ENCODE measurements at regions of chr17 and their contacts with region 1.

Region 1: GRCh38 chr17:8209909-8210760 is at the start of gene AURKB:
- DNase-seq: peak; percentile 96
- ATAC-seq: peak; percentile 98
- H3K4me3 Mint-ChIP-seq: peak within 1 kb of the TSS; percentile 99
- H3K27ac Mint-ChIP-seq: peak within 1 kb of the TSS; percentile 97
- H3K4me1 Mint-ChIP-seq: peaks cover 20% of the 10 kb centered on the region
- H3K27me3 Mint-ChIP-seq: no peaks in the 10 kb centered on the region
- total RNA-seq, gene AURKB: 173 to 226 TPM

Region 2: DNA sequence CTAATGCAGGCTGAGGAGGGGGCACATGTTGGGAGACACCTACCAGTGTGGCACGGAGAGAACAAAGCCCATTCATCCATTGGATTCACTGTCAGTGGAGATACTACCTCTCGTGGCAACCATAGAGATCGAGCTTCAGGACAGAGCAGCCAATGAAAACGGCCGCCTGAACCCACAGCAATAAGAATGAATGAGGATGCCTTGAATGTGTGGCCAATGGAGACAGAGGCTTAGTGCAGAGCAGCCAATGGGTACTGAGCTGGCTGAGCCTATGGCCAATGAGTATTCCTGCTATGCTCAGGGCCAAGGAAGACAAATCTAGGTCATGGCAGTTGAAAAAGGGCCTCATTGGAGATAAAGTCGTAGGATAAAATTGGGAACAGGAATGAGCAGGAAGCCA is 110.9 kb after region 1 on chr17:
- CTCF ChIA-PET with region 1: no interaction called
- POLR2A ChIA-PET with region 1: interaction called, 12 read pairs
- intact Hi-C with region 1: no loop called
- DNase-seq: no peak
- ATAC-seq: peak; percentile 23
- H3K4me3 Mint-ChIP-seq: no peak overlapping the region
- H3K27ac Mint-ChIP-seq: no peak overlapping the region
- H3K4me1 Mint-ChIP-seq: peaks cover under 1% of the 10 kb centered on the region
- H3K27me3 Mint-ChIP-seq: peaks cover 14% of the 10 kb centered on the region